H1 (cell line): ENCODE measurements at regions of chr7 and their contacts with region 1.

Region 1: DNA sequence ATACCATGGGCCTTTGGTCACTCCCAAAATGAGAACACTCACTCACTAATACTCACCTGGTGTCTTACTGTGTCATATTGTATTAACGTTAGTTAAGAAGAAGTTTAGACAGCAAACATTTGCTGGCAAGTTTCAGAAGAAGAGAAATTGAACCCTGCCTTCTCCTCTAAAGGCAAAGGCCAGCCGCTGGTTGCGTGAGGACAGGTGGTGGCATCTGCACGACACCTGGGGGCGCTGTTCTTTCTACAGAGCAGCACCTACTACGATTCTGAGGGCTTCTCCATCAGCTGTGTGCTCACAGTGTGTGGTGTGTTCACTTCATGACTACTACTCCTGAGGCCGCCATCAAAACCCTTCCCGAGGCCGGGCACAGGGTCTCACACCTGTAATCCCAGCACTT is 17.9 kb upstream of the CLEC2L start:
- DNase-seq: peak in 1 of 2 experiments; percentile 81
- H3K4me3 ChIP-seq: no peak overlapping the region
- H3K27ac ChIP-seq: no peak overlapping the region
- H3K4me1 ChIP-seq: peaks cover 0 to 4% (median 0%) of the 10 kb centered on the region in 4 experiments; a peak in 1 of 7 replicates
- H3K27me3 ChIP-seq: no peaks in the 10 kb centered on the region
- CTCF ChIP-seq: peak; percentile 86 to 93 (median 93)
- EP300 ChIP-seq: no peak
- POLR2A ChIP-seq: no peak
- RAD21 ChIP-seq: peak; percentile 78 to 82

Region 2: DNA sequence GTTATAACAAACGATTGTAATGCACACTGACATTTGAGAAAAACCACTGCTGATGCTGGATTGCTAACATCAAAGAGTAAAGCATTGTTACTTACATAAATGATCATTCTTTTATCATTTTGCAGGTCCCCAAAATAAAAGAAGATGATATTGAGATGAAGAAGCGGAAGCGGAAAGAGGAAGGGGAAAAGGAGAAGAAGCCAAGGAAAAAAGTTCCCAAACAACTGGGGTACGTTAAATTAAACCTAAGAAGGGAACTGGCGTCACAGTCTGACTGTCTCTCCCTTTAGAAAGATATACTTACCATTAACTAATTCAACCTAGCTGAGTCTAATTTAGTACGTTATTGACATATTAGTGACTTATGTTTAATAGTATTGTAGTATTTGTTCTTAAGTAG is 246.4 kb before region 1 on chr7:
- CTCF ChIA-PET with region 1: no interaction called
- POLR2A ChIA-PET with region 1: no interaction called
- DNase-seq: no peak
- H3K4me3 ChIP-seq: no peak overlapping the region
- H3K27ac ChIP-seq: no peak overlapping the region
- H3K4me1 ChIP-seq: no peaks in the 10 kb centered on the region
- H3K27me3 ChIP-seq: no peaks in the 10 kb centered on the region
- CTCF ChIP-seq: no peak
- EP300 ChIP-seq: no peak
- POLR2A ChIP-seq: no peak
- RAD21 ChIP-seq: no peak

Region 3: GRCh38 chr7:139482662-139483469 is 22.7 kb before region 1 on chr7:
- CTCF ChIA-PET with region 1: interaction called, 5 read pairs
- POLR2A ChIA-PET with region 1: interaction called, 11 read pairs
- DNase-seq: peak in 1 of 2 experiments; percentile 73
- H3K4me3 ChIP-seq: peak overlapping the region; percentile 57 to 71 (median 64)
- H3K27ac ChIP-seq: no peak overlapping the region
- H3K4me1 ChIP-seq: peaks cover 0 to 8% (median 4%) of the 10 kb centered on the region in 4 experiments; a peak in 5 of 7 replicates
- H3K27me3 ChIP-seq: peaks cover 0 to 11% (median 5%) of the 10 kb centered on the region in 4 experiments; a peak in 4 of 7 replicates
- CTCF ChIP-seq: no peak
- EP300 ChIP-seq: no peak
- POLR2A ChIP-seq: peak in 1 of 2 experiments; percentile 13; a peak in 1 of 3 replicates
- RAD21 ChIP-seq: no peak

Region 4: DNA sequence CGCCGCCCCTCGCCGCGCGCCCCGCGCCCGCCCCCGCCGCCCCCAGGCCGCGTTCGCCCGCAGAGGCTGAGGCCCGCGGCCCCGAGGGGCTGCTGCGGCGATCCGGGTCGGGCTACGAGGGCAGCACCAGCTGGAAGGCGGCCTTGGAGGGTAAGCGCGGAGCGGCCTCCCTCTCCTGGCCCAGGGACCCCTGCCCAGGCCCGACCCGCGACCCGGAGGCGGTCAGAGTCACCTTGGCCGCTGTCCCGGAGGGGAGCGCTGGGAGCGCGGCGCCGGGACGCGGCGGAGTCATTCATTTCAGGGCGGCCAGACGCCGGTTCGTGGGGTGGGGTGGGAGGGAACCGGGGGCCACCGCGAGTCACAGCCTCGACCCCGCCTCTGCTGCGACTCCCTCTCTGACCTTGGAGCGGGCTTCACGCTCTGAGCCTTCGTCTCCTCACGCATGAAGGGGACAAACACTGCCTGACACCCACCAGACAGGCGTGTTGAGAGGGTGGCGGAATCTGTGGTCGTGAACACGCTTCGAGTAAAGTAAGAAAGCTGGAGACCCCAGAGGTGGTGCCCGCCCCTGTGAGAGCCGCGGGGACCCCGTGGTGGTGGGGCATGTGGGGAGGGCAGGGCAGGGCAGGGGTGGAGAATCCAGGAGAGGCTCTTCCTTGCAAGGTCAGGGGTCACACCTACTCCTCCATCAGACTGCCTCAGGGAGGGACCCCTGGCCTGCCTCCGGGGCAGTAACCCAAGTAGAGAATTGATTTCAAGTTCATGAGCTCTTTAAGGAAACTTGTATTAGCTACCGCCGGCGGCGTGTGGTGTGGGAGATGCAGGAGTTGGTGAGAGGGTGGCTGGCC is 18.6 kb after region 1 on chr7:
- CTCF ChIA-PET with region 1: interaction called, 13 read pairs
- POLR2A ChIA-PET with region 1: interaction called, 5 read pairs
- DNase-seq: peak in 1 of 2 experiments; percentile 66
- H3K4me3 ChIP-seq: peak overlapping the region in 2 of 4 experiments; percentile 43 to 52; a peak in 4 of 8 replicates
- H3K27ac ChIP-seq: no peak overlapping the region
- H3K4me1 ChIP-seq: peaks cover 0 to 7% (median 0%) of the 10 kb centered on the region in 4 experiments; a peak in 2 of 7 replicates
- H3K27me3 ChIP-seq: peaks cover 20 to 47% (median 38%) of the 10 kb centered on the region in 4 experiments
- CTCF ChIP-seq: no peak
- EP300 ChIP-seq: no peak
- POLR2A ChIP-seq: no peak
- RAD21 ChIP-seq: no peak

Region 5: GRCh38 chr7:139557857-139558581 is 52.5 kb after region 1 on chr7:
- CTCF ChIA-PET with region 1: interaction called, 156 read pairs
- POLR2A ChIA-PET with region 1: interaction called, 3 read pairs
- DNase-seq: no peak
- H3K4me3 ChIP-seq: no peak overlapping the region
- H3K27ac ChIP-seq: no peak overlapping the region
- H3K4me1 ChIP-seq: peaks cover 0 to 4% (median 2%) of the 10 kb centered on the region in 4 experiments; a peak in 4 of 7 replicates
- H3K27me3 ChIP-seq: no peaks in the 10 kb centered on the region
- CTCF ChIP-seq: peak; percentile 59 to 79 (median 69)
- EP300 ChIP-seq: no peak
- POLR2A ChIP-seq: no peak
- RAD21 ChIP-seq: peak; percentile 36 to 58

Region 6: DNA sequence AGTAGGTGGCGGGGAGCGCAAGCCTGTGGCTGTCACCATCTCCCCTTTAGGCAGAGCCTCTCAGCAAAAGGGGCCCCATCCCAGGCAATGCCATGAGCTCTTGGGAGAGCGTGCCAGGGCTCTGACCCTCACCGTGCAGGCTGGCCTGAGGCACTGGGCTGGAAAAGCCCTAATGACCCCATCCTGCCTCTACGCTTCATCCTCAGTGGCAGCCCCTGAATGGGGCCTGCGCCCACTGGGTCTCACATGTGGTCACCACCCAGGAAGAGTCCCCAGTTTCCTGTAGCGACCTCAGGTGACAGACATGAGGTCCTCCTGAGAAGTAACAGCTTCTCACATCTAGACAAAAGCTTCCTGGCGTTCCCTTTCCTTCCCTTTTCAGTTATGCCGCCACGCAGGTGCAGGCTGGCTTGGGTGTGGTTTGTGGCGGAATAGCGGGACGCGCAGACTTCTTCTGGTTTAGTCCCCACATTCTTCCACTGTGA is 77.2 kb after region 1 on chr7:
- CTCF ChIA-PET with region 1: interaction called, 14 read pairs
- POLR2A ChIA-PET with region 1: interaction called, 3 read pairs
- DNase-seq: no peak
- H3K4me3 ChIP-seq: no peak overlapping the region
- H3K27ac ChIP-seq: no peak overlapping the region
- H3K4me1 ChIP-seq: no peaks in the 10 kb centered on the region
- H3K27me3 ChIP-seq: no peaks in the 10 kb centered on the region
- CTCF ChIP-seq: no peak
- EP300 ChIP-seq: no peak
- POLR2A ChIP-seq: no peak
- RAD21 ChIP-seq: no peak